ENCODE measurements at regions of chr6 and their contacts with region 1.

Region 1: DNA sequence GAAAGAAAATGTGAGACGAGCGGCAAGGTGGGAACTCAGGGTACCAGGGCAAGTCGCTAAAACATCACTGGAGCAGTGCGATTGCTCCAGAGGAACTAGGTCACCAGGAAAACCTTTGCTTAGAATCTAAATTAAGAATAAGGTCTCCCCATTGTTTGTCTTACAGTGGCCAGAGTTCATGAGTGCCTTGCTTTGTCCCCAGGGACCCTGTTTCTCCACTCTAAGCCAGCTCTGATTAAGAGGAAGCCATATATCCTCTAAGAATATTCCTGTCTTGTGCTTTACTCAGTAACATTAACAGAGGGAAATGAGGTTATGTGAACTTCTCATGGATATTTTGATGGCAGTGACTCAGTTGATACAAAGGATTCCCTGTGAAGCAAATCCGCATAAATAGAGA is 305.8 kb downstream of the CD83 start:
- DNase-seq: no peak
- ATAC-seq: no peak
- H3K4me3 Mint-ChIP-seq: no peak overlapping the region
- H3K27ac Mint-ChIP-seq: peak overlapping the region; percentile 96
- H3K4me1 Mint-ChIP-seq: peaks cover 54% of the 10 kb centered on the region
- H3K27me3 Mint-ChIP-seq: no peaks in the 10 kb centered on the region

Region 2: DNA sequence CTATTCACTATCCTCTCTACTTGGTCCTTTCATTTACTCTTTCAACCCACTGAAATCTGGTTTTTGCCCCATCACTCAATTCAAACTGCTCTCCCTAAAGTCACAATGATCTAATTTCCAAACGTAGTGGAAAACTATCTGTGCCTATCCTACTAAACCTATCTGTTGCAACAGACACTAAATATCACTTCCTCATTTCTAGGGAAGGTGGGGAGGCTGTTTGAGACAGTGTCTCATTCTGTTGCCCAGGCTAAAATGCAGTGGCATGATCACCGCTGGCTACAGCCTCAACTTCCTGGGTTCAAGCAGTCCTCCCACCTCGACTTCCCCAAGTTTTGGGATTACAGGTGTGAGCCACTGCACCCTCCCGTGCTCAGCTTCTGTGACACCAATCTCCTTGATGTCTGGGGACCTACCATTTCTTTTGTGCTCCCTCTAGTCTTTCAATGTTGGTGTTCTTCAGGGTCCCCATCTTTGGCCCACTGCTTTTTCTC is 720.5 kb before region 1 on chr6:
- CTCF ChIA-PET with region 1: no interaction called
- POLR2A ChIA-PET with region 1: no interaction called
- intact Hi-C with region 1: no loop called
- DNase-seq: no peak
- ATAC-seq: no peak
- H3K4me3 Mint-ChIP-seq: no peak overlapping the region
- H3K27ac Mint-ChIP-seq: no peak overlapping the region
- H3K4me1 Mint-ChIP-seq: peaks cover 35% of the 10 kb centered on the region
- H3K27me3 Mint-ChIP-seq: no peaks in the 10 kb centered on the region

Region 3: DNA sequence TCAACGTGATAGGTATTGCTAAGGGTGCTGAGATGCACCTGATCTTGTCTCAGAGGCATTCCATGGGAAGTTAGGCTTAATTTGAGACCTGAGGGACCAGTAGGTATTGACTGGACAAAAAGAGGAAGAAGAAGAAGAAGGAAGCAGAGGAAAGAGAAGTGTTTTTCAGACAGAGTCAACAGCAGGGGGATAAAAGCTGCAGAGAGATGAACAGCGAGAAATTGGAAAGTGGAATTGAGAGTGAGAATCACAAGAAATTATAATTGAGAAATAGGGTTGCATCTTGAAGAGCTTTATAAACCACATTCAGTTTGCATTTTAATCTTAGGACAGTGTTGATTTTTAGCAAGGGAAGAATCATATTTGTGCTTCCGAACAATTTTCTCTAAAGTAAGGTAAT is 51.8 kb before region 1 on chr6:
- CTCF ChIA-PET with region 1: no interaction called
- POLR2A ChIA-PET with region 1: no interaction called
- intact Hi-C with region 1: loop called in 1 of 2 experiments (anchors 5 kb)
- DNase-seq: no peak
- ATAC-seq: peak; percentile 20
- H3K4me3 Mint-ChIP-seq: peak overlapping the region; percentile 24
- H3K27ac Mint-ChIP-seq: peak overlapping the region; percentile 37
- H3K4me1 Mint-ChIP-seq: peaks cover 40% of the 10 kb centered on the region
- H3K27me3 Mint-ChIP-seq: peaks cover 2% of the 10 kb centered on the region

Region 4: GRCh38 chr6:14458669-14459266 is 35.4 kb after region 1 on chr6:
- CTCF ChIA-PET with region 1: no interaction called
- POLR2A ChIA-PET with region 1: no interaction called
- intact Hi-C with region 1: no loop called
- DNase-seq: no peak
- ATAC-seq: no peak
- H3K4me3 Mint-ChIP-seq: no peak overlapping the region
- H3K27ac Mint-ChIP-seq: no peak overlapping the region
- H3K4me1 Mint-ChIP-seq: peaks cover 47% of the 10 kb centered on the region
- H3K27me3 Mint-ChIP-seq: no peaks in the 10 kb centered on the region

Region 5: DNA sequence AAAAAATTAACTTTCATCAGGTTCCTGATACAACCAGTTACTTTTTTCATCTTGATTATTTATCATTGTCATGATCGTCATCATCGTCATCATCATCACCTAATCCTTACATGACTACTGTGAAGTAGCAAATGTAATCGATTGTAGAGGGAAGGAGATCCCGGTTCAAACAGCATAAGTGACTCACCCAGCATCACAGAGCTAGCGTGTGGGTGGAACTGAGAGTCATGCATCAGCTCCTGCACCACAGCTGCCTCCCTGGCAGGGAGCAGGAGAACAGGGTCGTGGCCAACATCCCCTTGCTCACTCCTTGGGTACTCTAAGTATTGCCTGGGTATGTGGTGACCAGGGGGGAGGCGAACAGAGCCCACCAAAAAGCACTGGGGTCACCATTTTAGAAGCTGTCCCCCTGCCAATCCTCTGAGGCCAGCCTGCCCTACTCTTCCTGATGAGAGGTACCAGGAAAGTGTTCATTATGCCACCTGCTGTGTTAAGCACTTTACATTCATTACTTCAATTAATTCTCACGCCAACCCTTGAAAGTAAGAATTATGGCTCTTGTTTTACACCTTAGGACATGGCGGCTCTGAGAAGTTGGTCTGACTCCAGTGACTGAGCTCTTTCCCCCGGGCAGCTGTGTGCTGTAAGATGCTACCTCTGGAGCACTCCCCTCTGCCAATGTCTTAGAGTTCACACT is 119.5 kb after region 1 on chr6:
- CTCF ChIA-PET with region 1: no interaction called
- POLR2A ChIA-PET with region 1: no interaction called
- intact Hi-C with region 1: loop called (anchors 1 kb)
- DNase-seq: peak; percentile 90
- ATAC-seq: peak; percentile 99
- H3K4me3 Mint-ChIP-seq: no peak overlapping the region
- H3K27ac Mint-ChIP-seq: peak overlapping the region; percentile 79
- H3K4me1 Mint-ChIP-seq: peaks cover 41% of the 10 kb centered on the region
- H3K27me3 Mint-ChIP-seq: peaks cover 2% of the 10 kb centered on the region

Region 6: DNA sequence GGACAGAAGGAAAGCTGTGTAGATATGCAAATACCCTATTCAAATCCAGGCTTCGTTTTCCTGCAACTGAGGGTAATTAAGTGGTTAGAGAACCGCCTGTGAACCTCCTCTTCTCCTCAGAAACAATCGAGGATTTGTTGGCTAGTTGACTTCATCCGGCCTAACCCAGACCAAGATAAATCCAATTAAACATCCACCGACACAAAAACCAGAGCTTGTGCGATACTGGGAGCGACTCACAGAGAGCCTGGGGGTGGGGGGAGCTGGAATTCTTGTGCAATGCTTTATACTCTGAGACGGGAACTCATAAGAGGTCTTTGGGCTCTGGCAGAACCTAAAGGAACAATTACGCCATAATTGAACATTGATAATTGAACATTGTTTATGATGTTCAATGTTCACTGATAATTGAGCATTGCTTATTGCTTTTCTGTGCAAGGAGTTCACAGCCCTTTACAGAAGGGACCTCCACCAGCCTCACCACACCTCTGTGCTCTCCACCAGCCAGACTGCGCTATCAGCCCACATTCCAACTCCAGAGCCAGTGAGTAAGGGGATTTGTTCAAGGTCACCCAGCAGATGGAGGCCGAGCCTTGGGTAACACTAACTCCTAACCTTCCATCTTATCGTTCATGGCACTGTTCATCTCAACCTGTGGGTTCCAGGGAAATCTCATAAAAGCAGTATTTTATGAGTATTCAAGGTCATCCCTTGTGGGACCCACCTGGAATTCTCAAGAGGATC is 393.0 kb after region 1 on chr6:
- CTCF ChIA-PET with region 1: no interaction called
- POLR2A ChIA-PET with region 1: no interaction called
- intact Hi-C with region 1: loop called in 1 of 2 experiments (anchors 1 kb)
- DNase-seq: no peak
- ATAC-seq: no peak
- H3K4me3 Mint-ChIP-seq: no peak overlapping the region
- H3K27ac Mint-ChIP-seq: no peak overlapping the region
- H3K4me1 Mint-ChIP-seq: peaks cover 18% of the 10 kb centered on the region
- H3K27me3 Mint-ChIP-seq: no peaks in the 10 kb centered on the region